Common myeloid progenitor, CD34-positive (primary cell): ENCODE measurements at regions of chr7 and their contacts with region 1.

Region 1: GRCh38 chr7:51162724-51163329 is 153.8 kb downstream of the COBL start:
- DNase-seq: peak; percentile 85 to 91 (median 87)
- H3K4me3 ChIP-seq: no peak overlapping the region
- H3K27ac ChIP-seq: no peak overlapping the region
- H3K4me1 ChIP-seq: peaks cover under 1 to 18% (median 12%) of the 10 kb centered on the region in 4 experiments
- H3K27me3 ChIP-seq: peaks cover 0 to 2% (median 0%) of the 10 kb centered on the region in 5 experiments

Region 2: GRCh38 chr7:50418086-50418515 is 744.7 kb before region 1 on chr7:
- CTCF ChIA-PET with region 1: interaction called, 11 read pairs
- POLR2A ChIA-PET with region 1: no interaction called
- DNase-seq: peak; percentile 79 to 84 (median 83)
- H3K4me3 ChIP-seq: no peak overlapping the region
- H3K27ac ChIP-seq: no peak overlapping the region
- H3K4me1 ChIP-seq: peaks cover 7 to 29% (median 15%) of the 10 kb centered on the region in 4 experiments
- H3K27me3 ChIP-seq: no peaks in the 10 kb centered on the region

Region 3: DNA sequence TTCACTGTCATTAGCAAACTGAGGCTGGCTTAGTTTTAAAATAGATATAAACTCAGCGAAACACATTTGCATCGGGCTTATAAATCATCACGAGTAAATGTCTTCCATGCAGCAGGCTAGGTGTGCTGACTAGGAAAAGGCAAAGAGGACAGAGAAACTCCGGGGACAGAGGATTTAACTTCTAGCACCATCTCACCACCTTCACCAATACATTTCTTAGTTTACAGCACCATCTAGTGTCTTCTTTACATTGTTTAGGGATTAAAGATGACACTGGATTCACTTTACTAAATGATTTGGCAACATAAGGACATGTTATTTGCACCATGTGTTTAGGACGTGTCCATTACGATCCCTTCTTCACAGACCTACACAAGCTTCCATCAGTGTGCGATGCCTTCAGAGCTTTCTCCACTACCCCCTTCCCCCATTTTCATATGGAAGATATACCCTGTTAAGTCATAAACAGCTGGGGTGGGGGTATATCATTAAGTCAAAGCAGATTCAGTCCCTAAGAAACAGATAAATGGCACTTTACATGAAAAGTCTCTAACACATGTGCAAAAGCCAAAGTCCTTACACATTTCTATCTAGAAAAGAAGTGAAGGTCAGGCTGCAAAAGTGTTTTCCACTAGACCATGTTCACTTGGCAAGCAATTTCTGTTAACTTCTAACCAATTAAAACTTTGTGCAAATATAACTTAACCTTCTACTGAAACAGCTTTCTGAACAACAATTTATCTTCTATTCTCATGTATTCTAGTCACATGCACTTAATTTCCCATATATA is 483.4 kb before region 1 on chr7:
- CTCF ChIA-PET with region 1: interaction called, 20 read pairs
- POLR2A ChIA-PET with region 1: no interaction called
- DNase-seq: peak; percentile 54 to 73 (median 70)
- H3K4me3 ChIP-seq: no peak overlapping the region
- H3K27ac ChIP-seq: no peak overlapping the region
- H3K4me1 ChIP-seq: peaks cover 2 to 22% (median 18%) of the 10 kb centered on the region in 4 experiments
- H3K27me3 ChIP-seq: no peaks in the 10 kb centered on the region

Region 4: DNA sequence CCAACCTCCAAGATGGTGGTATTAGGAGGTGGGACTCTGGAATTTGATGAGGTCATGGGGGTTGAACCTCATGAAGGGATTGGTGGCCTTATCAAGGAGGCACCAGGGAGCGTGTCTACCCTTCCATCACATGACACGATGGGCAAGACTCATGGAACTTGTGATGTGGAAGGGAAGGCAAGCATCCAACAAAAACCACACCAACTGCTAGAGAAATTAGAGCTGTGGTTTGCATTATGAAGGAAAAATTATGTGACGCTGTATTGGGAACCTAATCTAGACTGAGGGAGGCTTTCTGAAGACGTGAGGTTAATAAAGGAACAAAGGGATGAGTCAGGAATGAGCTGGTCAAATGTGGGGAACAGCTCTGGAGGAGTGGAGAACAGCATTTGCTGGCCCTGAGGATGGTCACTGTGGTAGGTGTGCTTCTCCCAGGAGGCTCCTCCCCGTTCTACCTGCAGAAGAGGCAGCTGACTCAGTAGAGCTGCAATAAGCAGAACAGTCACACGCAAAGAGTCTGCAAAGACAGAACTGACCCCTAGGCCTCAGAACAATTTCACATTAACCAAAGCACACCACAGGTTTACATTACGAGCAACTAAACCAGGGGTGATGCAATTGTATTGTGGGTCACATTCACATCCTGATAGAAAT is 143.5 kb before region 1 on chr7:
- CTCF ChIA-PET with region 1: no interaction called
- POLR2A ChIA-PET with region 1: no interaction called
- DNase-seq: peak; percentile 20 to 75 (median 69)
- H3K4me3 ChIP-seq: no peak overlapping the region
- H3K27ac ChIP-seq: no peak overlapping the region
- H3K4me1 ChIP-seq: peaks cover 0 to 9% (median 4%) of the 10 kb centered on the region in 4 experiments
- H3K27me3 ChIP-seq: no peaks in the 10 kb centered on the region

Region 5: GRCh38 chr7:51141451-51142003 is 21.3 kb before region 1 on chr7:
- CTCF ChIA-PET with region 1: interaction called, 152 read pairs
- POLR2A ChIA-PET with region 1: no interaction called
- DNase-seq: peak; percentile 57 to 78 (median 74)
- H3K4me3 ChIP-seq: no peak overlapping the region
- H3K27ac ChIP-seq: no peak overlapping the region
- H3K4me1 ChIP-seq: peaks cover 15 to 44% (median 25%) of the 10 kb centered on the region in 4 experiments
- H3K27me3 ChIP-seq: peaks cover 0 to 2% (median 0%) of the 10 kb centered on the region in 5 experiments

Region 6: DNA sequence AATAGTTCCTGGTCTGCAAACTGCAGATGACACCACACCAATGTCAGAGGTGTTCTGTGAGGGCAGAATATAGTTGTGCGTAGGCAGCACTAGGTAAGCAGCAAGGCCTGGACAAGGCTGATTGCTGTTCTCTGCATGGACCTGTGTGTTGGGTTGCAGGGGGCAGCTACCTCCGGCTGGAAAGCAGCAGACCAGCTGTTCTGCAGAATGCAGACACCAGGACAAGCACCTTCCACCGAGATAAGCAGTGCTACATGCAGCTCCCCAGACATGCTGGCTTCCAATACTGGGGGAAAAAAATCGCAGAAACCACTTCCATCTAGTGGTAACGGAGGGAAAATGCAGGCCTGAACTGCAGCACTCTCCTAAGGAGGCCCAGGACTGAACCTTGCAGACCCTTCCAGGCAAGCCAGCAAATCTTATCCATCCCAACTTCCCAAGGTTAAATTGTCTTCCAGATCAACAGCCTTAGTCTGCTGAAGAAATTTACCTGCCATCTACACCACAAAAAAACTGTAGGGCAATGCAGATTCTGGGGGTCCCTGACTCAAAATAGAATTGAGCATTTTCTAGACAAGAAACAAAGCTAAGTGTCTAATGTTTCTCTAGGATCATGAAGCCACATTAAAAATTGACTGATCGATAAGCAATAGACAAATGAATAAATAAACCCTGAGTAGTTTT is 204.2 kb after region 1 on chr7:
- CTCF ChIA-PET with region 1: interaction called, 113 read pairs
- POLR2A ChIA-PET with region 1: no interaction called
- DNase-seq: peak; percentile 59 to 77 (median 73)
- H3K4me3 ChIP-seq: no peak overlapping the region
- H3K27ac ChIP-seq: no peak overlapping the region
- H3K4me1 ChIP-seq: peaks cover 0 to 2% (median 0%) of the 10 kb centered on the region in 4 experiments
- H3K27me3 ChIP-seq: no peaks in the 10 kb centered on the region